ENCODE measurements at regions of chr1 and their contacts with region 1.

Region 1: DNA sequence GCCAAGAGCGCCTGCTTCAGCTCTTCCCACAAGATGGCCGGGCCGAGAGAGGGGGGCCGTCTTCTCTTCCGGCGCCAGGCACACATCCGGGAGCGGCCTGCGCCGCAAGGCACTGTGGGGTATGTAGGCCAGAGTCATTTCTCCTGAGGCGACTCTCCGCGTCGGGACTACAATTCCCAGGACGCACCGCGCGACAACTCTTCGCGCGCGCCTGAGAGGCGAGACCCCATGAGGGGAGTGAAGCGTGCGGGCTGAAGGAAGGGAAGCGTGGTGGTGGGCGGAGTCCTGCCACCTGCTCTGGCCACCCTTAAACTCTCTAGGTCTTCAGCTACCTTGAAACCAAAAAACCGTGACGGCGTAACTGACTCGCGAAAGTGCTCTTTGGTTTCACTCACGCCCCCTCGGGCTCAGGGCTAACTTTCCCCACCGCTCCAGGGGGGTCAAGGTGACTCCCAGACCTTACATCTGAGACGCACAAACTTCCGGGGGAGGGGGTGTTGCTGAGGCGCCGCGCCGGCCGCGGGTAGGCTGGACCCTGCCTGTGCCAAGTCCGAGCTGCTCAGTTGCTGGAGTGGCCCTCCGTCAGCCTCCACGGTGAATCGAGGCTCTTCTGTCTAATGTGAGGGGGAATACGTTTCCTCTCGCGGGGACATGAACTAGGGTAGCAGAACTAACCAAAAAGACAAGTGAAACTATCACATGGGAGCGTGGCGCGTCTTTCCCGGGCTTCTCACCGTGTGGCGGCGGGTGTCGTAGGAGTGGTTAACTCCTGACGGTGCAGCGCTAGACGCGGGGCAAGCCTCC is at the start of gene SERBP1:
- DNase-seq: peak; percentile 97
- ATAC-seq: peak; percentile 91
- H3K4me3 Mint-ChIP-seq: peak within 1 kb of the TSS; percentile 97
- H3K27ac Mint-ChIP-seq: peak within 1 kb of the TSS; percentile 100
- H3K4me1 Mint-ChIP-seq: peaks cover 48% of the 10 kb centered on the region
- H3K27me3 Mint-ChIP-seq: no peaks in the 10 kb centered on the region
- total RNA-seq, gene SERBP1: 433 to 510 TPM

Region 2: DNA sequence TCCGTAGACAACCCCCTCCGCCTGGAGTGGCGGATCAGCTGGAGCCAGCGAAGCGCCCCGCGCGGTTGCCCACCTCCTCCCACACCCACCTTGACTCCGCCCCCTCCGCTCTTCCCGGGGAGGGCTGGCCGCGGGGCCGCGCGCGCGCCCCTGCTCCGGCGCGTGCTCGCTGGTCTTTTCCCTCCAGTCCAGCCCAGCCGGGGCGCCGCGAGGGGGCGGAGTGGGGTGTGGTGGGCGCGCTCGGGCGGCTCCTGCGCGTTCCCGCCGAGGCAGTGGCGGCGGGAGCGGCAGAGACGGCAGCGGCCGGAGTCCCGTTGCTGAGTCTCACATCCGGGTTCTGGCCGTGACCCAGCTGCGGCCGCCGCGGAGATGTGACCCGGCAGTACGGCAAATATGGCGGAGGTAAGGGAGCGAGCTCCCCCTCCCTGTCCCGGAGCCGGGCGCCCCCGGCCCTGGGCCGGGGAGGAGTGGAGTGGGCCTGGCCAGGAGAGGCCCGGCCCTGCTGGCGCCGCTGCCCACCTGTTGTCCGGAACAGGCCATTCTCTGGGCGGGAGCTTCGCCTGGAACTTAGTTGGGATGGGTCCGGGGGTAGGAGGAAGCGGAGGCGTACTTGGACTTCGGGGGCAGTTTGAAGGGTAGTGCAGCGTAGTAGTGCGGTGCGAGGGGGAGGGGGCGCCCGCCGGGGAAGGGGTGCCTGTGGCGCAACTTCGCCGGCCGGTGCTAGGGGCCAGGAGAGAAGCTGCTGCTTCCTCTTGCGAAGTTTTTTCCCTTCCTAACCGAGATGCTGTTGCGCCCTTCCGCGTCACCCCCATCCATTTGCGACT is 500.3 kb before region 1 on chr1:
- CTCF ChIA-PET with region 1: no interaction called
- POLR2A ChIA-PET with region 1: no interaction called
- intact Hi-C with region 1: loop called (anchors 1 to 5 kb)
- DNase-seq: peak; percentile 96
- ATAC-seq: peak; percentile 63
- H3K4me3 Mint-ChIP-seq: peak overlapping the region; percentile 86
- H3K27ac Mint-ChIP-seq: peak overlapping the region; percentile 94
- H3K4me1 Mint-ChIP-seq: peaks cover 53% of the 10 kb centered on the region
- H3K27me3 Mint-ChIP-seq: no peaks in the 10 kb centered on the region

Region 3: DNA sequence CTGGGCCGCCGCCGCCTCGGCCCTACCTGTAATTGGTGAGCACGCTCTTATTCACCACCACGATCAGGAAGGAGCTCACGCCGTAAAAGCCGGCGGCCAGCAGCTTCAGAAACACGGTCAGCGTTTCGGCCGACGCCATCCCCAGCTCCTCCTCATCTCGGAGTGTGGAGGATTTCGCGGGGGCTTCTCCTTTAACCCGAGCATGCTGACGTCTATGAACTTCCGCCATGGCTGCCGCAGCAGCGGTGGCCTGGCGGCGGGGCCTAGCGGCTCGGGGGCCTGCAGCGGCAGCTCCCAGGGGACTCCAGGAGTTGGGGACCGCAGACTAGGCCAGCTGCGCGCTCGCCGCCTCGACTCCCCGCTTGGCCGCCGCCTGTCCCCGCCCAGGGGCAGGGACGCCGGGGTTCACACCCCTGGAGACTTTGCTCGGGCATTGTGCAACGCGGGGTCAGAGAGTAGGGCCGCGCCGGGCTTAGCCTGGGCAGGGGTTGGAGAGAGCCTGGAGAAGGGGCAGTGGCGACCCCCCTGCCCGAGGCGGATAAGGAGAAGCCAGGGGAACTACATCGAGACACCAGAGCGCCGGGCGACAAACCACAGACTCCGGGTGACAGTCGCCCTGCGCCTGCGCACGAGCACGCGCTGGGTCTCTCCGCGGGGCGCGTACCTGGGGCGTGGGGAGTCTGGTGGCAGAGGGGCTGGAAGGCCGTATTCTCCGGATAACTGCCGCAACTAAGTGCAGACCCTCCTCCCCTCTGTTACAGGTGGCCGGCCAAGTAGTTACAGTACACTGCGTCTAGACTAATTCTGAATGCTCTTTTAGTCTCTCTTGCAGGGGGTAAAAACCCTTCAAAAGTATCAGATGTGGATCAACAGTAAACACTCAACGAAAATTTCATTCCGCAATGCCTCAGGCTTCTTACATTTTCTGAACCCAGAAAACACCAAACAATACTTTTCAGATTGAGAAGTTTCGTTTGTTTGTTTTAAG is 376.5 kb before region 1 on chr1 and contains the start of gene SLC35D1:
- CTCF ChIA-PET with region 1: no interaction called
- POLR2A ChIA-PET with region 1: no interaction called
- intact Hi-C with region 1: loop called (anchors 2 to 5 kb)
- DNase-seq: peak; percentile 77
- ATAC-seq: peak; percentile 79
- H3K4me3 Mint-ChIP-seq: peak within 1 kb of the TSS; percentile 79
- H3K27ac Mint-ChIP-seq: peak within 1 kb of the TSS; percentile 91
- H3K4me1 Mint-ChIP-seq: peaks cover 26% of the 10 kb centered on the region
- H3K27me3 Mint-ChIP-seq: peaks cover 5% of the 10 kb centered on the region
- total RNA-seq, gene SLC35D1: 8.7 to 10.3 TPM

Region 4: GRCh38 chr1:67227196-67227595 is 203.4 kb before region 1 on chr1:
- CTCF ChIA-PET with region 1: no interaction called
- POLR2A ChIA-PET with region 1: no interaction called
- intact Hi-C with region 1: no loop called
- DNase-seq: no peak
- ATAC-seq: no peak
- H3K4me3 Mint-ChIP-seq: no peak overlapping the region
- H3K27ac Mint-ChIP-seq: no peak overlapping the region
- H3K4me1 Mint-ChIP-seq: peaks cover 11% of the 10 kb centered on the region
- H3K27me3 Mint-ChIP-seq: no peaks in the 10 kb centered on the region

Region 5: GRCh38 chr1:67332653-67333529 is 97.7 kb before region 1 on chr1:
- CTCF ChIA-PET with region 1: no interaction called
- POLR2A ChIA-PET with region 1: interaction called, 7 read pairs
- intact Hi-C with region 1: loop called (anchors 1 to 2 kb)
- DNase-seq: peak; percentile 62
- ATAC-seq: peak; percentile 86
- H3K4me3 Mint-ChIP-seq: peak overlapping the region; percentile 44
- H3K27ac Mint-ChIP-seq: peak overlapping the region; percentile 87
- H3K4me1 Mint-ChIP-seq: peaks cover 79% of the 10 kb centered on the region
- H3K27me3 Mint-ChIP-seq: no peaks in the 10 kb centered on the region

Region 6: GRCh38 chr1:67404212-67404620 is 26.3 kb before region 1 on chr1:
- CTCF ChIA-PET with region 1: interaction called, 3 read pairs
- POLR2A ChIA-PET with region 1: interaction called, 8 read pairs
- intact Hi-C with region 1: loop called in 1 of 2 experiments (anchors 2 kb)
- DNase-seq: no peak
- ATAC-seq: no peak
- H3K4me3 Mint-ChIP-seq: no peak overlapping the region
- H3K27ac Mint-ChIP-seq: no peak overlapping the region
- H3K4me1 Mint-ChIP-seq: peaks cover 19% of the 10 kb centered on the region
- H3K27me3 Mint-ChIP-seq: no peaks in the 10 kb centered on the region

Region 7: GRCh38 chr1:67460676-67461500 is 30.3 kb after region 1 on chr1:
- CTCF ChIA-PET with region 1: interaction called, 10 read pairs
- POLR2A ChIA-PET with region 1: no interaction called
- intact Hi-C with region 1: no loop called
- DNase-seq: no peak
- ATAC-seq: no peak
- H3K4me3 Mint-ChIP-seq: no peak overlapping the region
- H3K27ac Mint-ChIP-seq: no peak overlapping the region
- H3K4me1 Mint-ChIP-seq: no peaks in the 10 kb centered on the region
- H3K27me3 Mint-ChIP-seq: no peaks in the 10 kb centered on the region

Measured in activated CD4-positive, alpha-beta T cell treated with anti-CD3 and anti-CD28 coated beads for 36 hours (primary cell).